Left ventricle myocardium superior (tissue), 1 donor: ENCODE measurements at regions of chr2 and their contacts with region 1.

Region 1: DNA sequence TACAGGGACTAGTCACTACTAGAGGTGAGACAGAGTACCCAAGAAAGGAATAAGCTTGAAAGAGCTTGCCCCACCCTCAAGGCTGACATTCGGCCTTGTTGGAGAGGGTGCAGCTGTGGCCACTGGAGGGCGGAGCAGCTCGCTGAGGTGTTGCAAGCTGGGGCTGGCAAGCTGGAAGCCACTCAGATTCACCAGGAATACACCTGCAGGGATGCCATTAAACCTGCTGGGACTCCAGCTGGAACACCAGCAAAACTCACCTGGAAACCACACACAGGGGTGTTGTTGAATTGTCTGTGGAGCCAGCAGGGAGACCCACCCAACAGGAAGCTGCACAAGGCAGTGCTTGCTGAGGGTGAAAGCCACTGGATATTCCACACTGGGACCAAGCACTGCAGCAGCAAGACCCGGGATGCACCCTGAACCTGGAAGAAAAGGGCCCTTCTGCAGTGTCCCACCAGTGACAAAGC is 26.1 kb downstream of the KCTD18 start:
- DNase-seq: no peak
- ATAC-seq: no peak

Region 2: GRCh38 chr2:199973703-199974102 is 510.1 kb before region 1 on chr2:
- intact Hi-C with region 1: loop called (anchors 5 kb)
- DNase-seq: no peak
- ATAC-seq: peak; percentile 41

Region 3: DNA sequence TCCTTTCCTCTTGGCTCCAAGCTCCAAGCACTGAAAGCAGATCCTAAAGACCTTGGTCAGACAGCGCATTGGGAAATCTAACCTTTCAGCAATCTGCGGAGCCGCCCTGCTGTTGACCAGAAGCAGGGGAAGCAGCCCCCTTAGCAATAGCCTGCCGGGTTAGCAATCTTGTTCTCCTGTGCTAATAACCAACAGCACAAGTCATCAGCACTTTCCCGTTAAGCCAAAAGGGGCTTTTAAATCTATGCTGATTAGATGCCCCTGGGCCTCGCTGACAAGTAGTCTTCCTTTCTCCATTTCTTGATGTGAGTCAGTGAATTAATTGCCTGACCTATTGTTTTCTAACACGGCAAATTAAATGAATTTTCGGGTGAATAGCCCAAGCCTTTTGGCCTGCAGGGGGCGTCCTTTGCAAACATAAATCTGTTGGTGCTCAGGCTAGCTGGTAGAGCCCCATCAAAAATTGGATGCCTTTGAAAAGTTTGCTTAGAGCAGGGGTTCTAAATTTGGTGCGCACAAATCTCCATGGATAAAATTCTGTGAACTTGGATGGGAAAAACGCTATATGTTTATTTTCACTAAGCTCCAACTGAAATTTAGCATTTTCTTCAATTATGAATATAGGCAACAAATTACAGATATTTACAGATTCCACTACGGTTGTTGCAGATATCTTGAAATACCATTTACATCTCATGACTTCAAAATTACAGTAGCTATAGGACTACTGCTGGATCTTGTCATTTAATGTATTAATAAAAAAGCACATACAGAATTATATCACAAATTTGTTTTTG is 503.7 kb before region 1 on chr2:
- intact Hi-C with region 1: loop called (anchors 5 kb)
- DNase-seq: peak; percentile 92
- ATAC-seq: peak; percentile 84

Region 4: GRCh38 chr2:200373973-200374416 is 109.8 kb before region 1 on chr2:
- intact Hi-C with region 1: no loop called
- DNase-seq: no peak
- ATAC-seq: no peak